Activated CD4-positive, alpha-beta T cell treated with anti-CD3 and anti-CD28 coated beads, Interleukin-2, amount 10 ng/mL, durations not matched to agents 24 days and 14 days (primary cell): ENCODE measurements at regions of chr14 and their contacts with region 1.

Region 1: DNA sequence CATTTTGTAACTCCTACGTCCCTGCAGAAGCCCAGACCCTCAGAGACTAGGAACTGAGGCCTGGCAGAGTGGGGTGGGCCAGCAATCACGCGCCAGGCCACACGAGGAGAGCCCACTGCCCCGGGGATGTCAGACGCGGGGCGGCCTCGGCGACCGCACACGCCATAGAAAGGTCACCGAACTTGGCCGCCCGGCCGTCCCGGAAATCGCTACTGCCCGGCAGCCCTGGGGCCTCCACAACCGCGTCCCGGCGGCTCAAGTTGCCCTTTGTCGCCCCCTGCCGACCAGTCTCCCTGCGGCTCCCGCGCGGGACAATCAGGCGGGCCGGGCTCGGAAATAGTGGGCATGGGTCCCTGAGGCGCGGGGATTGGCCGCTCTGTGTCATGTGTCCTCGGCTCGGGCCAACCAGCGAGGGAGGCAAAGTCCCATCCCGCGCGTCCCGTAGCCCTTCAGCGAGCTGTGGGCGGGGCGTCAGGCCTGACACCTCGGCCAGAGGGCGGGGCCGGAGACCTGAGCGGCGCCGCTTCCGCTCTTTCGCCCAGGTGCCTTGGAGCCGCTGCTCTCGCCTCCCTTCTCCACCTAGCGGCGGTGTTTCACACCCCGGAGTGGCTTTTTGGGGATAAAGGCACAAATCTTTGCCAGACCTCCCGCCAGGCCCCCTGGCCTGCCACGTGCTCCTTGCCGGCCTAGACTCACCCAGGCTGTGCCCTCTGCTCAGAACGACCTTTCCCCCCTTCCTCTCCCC is 33.4 kb upstream of the DEGS2 start:
- DNase-seq: peak; percentile 100
- H3K4me3 Mint-ChIP-seq: peak overlapping the region; percentile 74
- H3K27ac Mint-ChIP-seq: peak overlapping the region; percentile 93
- H3K4me1 Mint-ChIP-seq: peaks cover 9% of the 10 kb centered on the region
- H3K27me3 Mint-ChIP-seq: no peaks in the 10 kb centered on the region

Region 2: GRCh38 chr14:99315197-99315596 is 877.6 kb before region 1 on chr14:
- intact Hi-C with region 1: no loop called
- DNase-seq: no peak
- H3K4me3 Mint-ChIP-seq: no peak overlapping the region
- H3K27ac Mint-ChIP-seq: no peak overlapping the region
- H3K4me1 Mint-ChIP-seq: peaks cover 6% of the 10 kb centered on the region
- H3K27me3 Mint-ChIP-seq: peaks cover 16% of the 10 kb centered on the region

Region 3: GRCh38 chr14:99971087-99971940 is 221.5 kb before region 1 on chr14:
- intact Hi-C with region 1: loop called (anchors 1 kb)
- DNase-seq: peak; percentile 93
- H3K4me3 Mint-ChIP-seq: peak overlapping the region; percentile 64
- H3K27ac Mint-ChIP-seq: no peak overlapping the region
- H3K4me1 Mint-ChIP-seq: peaks cover 19% of the 10 kb centered on the region
- H3K27me3 Mint-ChIP-seq: peaks cover 40% of the 10 kb centered on the region

Region 4: GRCh38 chr14:99982537-99983250 is 210.2 kb before region 1 on chr14:
- intact Hi-C with region 1: loop called (anchors 1 kb)
- DNase-seq: peak; percentile 89
- H3K4me3 Mint-ChIP-seq: no peak overlapping the region
- H3K27ac Mint-ChIP-seq: no peak overlapping the region
- H3K4me1 Mint-ChIP-seq: peaks cover 16% of the 10 kb centered on the region
- H3K27me3 Mint-ChIP-seq: no peaks in the 10 kb centered on the region

Region 5: GRCh38 chr14:100108042-100108825 is 84.6 kb before region 1 on chr14:
- intact Hi-C with region 1: loop called (anchors 2 kb)
- DNase-seq: peak; percentile 95
- H3K4me3 Mint-ChIP-seq: peak overlapping the region; percentile 40
- H3K27ac Mint-ChIP-seq: peak overlapping the region; percentile 86
- H3K4me1 Mint-ChIP-seq: peaks cover 66% of the 10 kb centered on the region
- H3K27me3 Mint-ChIP-seq: no peaks in the 10 kb centered on the region

Region 6: DNA sequence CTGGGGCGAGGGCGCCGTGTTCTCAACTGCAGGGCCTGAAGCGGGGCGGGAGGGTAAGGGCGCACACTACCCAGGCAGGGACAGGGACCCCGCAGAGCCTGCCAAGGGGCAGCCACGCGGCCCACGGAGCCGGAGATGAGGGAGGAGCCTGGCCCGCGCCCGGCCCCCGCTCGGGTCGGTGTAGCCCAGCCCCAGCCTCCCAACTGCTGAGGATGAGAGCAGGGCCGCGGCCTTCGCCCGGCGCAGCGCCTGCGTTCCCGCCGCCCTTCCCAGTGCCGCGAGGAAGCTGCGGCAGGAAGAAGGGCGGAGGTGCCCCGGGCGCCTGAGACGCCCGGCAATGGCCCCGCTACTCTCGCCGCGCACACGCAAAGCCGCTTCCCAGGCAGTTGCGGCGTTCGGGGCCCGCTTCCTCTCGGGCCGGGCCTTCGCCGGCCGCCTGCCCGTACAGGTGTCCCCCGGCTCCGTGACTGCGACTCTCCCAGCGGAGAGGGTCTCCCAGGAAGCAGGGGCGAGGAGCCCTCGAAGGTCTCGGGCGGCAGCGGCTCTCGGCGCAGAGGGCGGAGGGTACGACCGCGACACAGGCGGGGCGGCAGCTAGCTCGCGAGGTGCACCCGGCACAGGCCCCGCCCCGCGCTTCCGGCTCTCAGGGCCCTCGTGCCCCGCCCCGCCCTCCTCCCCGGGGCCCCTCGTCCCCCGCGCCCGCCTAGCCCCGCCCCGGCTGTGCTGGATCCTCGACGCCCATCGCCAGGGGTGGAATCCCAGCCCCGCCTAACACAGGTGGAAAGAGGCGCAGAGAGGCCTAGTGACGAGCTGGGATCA is 21.3 kb after region 1 on chr14:
- intact Hi-C with region 1: loop called (anchors 1 kb)
- DNase-seq: peak; percentile 97
- H3K4me3 Mint-ChIP-seq: peak overlapping the region; percentile 74
- H3K27ac Mint-ChIP-seq: peak overlapping the region; percentile 88
- H3K4me1 Mint-ChIP-seq: peaks cover 19% of the 10 kb centered on the region
- H3K27me3 Mint-ChIP-seq: no peaks in the 10 kb centered on the region

Region 7: GRCh38 chr14:100224229-100224866 is 31.5 kb after region 1 on chr14:
- intact Hi-C with region 1: no loop called
- DNase-seq: peak; percentile 63
- H3K4me3 Mint-ChIP-seq: no peak overlapping the region
- H3K27ac Mint-ChIP-seq: no peak overlapping the region
- H3K4me1 Mint-ChIP-seq: peaks cover 6% of the 10 kb centered on the region
- H3K27me3 Mint-ChIP-seq: no peaks in the 10 kb centered on the region

Region 8: DNA sequence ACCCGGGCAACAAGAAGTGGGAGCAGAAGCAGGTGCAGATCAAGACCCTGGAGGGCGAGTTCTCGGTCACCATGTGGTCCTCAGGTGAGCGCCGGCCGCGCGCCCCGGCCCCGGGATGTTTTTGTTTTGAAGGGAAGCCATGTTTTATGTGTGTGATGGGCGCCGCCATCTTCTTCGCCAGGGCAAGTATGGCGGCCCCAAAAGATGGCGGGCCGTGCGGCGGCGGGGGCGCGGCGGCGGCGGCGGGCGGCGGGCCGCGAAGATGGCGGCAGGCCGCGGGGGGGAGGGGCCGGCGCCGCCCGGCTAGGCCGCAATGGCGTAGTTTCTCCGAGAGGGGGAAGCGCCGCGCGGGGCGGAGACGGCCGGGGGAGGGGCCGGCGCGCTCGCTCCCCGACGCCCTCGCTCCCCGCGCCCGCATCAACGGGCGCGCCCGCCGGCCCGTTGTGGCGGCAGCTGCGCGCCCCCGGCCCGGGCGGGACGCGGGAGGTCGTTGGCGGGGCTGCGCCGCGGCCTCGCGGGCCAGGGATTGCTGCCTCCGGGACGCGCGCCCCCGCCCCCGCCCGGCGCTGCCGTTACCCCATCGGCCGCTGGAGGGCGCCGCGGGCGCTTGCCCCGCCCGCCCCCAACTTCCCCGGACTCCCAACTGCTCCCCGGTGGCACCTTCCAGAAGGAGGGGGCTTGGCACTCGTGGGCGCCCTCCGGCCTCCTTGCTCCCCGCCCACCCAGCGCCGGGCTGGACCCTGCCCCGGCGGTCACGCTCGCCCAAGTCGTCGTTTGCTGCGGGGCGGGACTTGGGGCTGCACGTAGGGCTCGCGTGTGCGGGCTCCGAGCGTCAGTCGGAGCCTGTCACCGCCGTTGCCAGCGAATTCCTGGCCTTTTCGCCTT is 47.2 kb after region 1 on chr14:
- intact Hi-C with region 1: loop called (anchors 1 kb)
- DNase-seq: peak; percentile 96
- H3K4me3 Mint-ChIP-seq: peak overlapping the region; percentile 96
- H3K27ac Mint-ChIP-seq: peak overlapping the region; percentile 89
- H3K4me1 Mint-ChIP-seq: peaks cover 46% of the 10 kb centered on the region
- H3K27me3 Mint-ChIP-seq: peaks cover 2% of the 10 kb centered on the region